ENCODE measurements at regions of chr9 and their contacts with region 1.

Region 1: GRCh38 chr9:12391839-12392509 is 301.2 kb upstream of the TYRP1 start:
- DNase-seq: no peak
- ATAC-seq: no peak
- H3K4me3 Mint-ChIP-seq: no peak overlapping the region
- H3K27ac Mint-ChIP-seq: no peak overlapping the region
- H3K4me1 Mint-ChIP-seq: no peaks in the 10 kb centered on the region
- H3K27me3 Mint-ChIP-seq: no peaks in the 10 kb centered on the region
- CTCF ChIP-seq: no peak

Region 2: GRCh38 chr9:12441506-12441905 is 49.5 kb after region 1 on chr9:
- CTCF ChIA-PET with region 1: no interaction called
- POLR2A ChIA-PET with region 1: no interaction called
- intact Hi-C with region 1: loop called (anchors 5 kb)
- DNase-seq: no peak
- ATAC-seq: no peak
- H3K4me3 Mint-ChIP-seq: no peak overlapping the region
- H3K27ac Mint-ChIP-seq: no peak overlapping the region
- H3K4me1 Mint-ChIP-seq: no peaks in the 10 kb centered on the region
- H3K27me3 Mint-ChIP-seq: no peaks in the 10 kb centered on the region
- CTCF ChIP-seq: no peak